ENCODE measurements at regions of chr5 and their contacts with region 1.

Region 1: GRCh38 chr5:83683836-83684235 is 36.8 kb downstream of the HAPLN1 start:
- DNase-seq: no peak
- H3K4me3 ChIP-seq: no peak overlapping the region
- H3K4me3 Mint-ChIP-seq: no peak overlapping the region
- H3K27ac Mint-ChIP-seq: no peak overlapping the region
- H3K4me1 ChIP-seq: peaks cover 7% of the 10 kb centered on the region
- H3K4me1 Mint-ChIP-seq: peaks cover 14% of the 10 kb centered on the region
- H3K27me3 ChIP-seq: no peaks in the 10 kb centered on the region
- H3K27me3 Mint-ChIP-seq: no peaks in the 10 kb centered on the region
- CTCF ChIP-seq: no peak

Region 2: DNA sequence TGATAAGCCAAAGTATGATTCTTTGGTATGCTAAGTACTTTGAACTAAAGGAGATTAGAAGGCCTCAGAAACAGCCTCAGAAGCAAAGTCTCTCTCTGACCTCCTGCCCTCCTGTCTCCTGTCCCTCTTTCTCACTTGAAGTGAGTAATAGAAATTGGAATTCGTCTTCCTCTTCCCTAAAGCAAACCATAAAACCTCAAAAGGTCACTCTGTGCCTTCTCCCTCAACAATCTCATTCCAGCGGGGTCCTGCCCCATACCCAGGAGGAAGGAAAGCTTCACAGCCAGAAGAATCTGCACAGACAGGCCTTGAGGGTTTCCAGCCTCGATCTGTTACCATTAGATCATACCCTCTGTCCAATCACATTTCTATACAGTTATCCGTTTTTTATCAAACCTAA is 51.0 kb before region 1 on chr5:
- CTCF ChIA-PET with region 1: no interaction called
- POLR2A ChIA-PET with region 1: no interaction called
- intact Hi-C with region 1: loop called (anchors 2 kb)
- DNase-seq: peak; percentile 46 to 71
- H3K4me3 ChIP-seq: no peak overlapping the region
- H3K4me3 Mint-ChIP-seq: no peak overlapping the region
- H3K27ac Mint-ChIP-seq: peak overlapping the region; percentile 3
- H3K4me1 ChIP-seq: peaks cover 23% of the 10 kb centered on the region
- H3K4me1 Mint-ChIP-seq: peaks cover 10% of the 10 kb centered on the region
- H3K27me3 ChIP-seq: no peaks in the 10 kb centered on the region
- H3K27me3 Mint-ChIP-seq: no peaks in the 10 kb centered on the region
- CTCF ChIP-seq: no peak